ENCODE measurements at regions of chr2 and their contacts with region 1.

Region 1: GRCh38 chr2:44479122-44479887 is 117.6 kb downstream of the CAMKMT start:
- DNase-seq: no peak
- H3K4me3 ChIP-seq: no peak overlapping the region
- H3K27ac ChIP-seq: no peak overlapping the region
- H3K4me1 ChIP-seq: peaks cover 0 to 4% (median 0%) of the 10 kb centered on the region in 6 donors
- H3K27me3 ChIP-seq: no peaks in the 10 kb centered on the region
- CTCF ChIP-seq: peak; percentile 82 to 99 (median 94)
- POLR2A ChIP-seq: no peak

Region 2: DNA sequence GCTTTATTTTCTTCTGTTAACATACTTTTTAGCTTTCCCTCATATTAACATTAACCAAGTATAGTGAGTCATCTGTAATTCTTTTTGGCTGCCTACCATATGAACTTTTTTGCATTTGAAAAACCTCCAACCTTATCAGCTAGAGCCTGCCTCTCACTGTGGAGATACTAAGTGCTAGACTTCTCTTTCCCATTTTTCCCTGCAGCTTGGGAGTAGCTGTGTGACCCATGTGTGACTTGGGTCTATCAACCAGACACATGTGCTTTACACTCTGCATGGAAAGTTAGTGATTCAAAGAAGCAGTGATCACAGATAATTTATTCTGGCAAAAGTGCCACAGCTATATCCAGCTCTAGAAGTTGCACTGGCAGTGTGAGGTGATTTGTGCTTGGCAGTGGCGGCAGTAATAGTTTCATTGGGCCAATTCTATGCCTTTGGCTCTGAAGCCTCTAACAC is 154.3 kb before region 1 on chr2:
- intact Hi-C with region 1: no loop called
- DNase-seq: no peak
- H3K4me3 ChIP-seq: no peak overlapping the region
- H3K27ac ChIP-seq: no peak overlapping the region
- H3K4me1 ChIP-seq: no peaks in the 10 kb centered on the region
- H3K27me3 ChIP-seq: no peaks in the 10 kb centered on the region
- CTCF ChIP-seq: no peak
- POLR2A ChIP-seq: no peak

Region 3: DNA sequence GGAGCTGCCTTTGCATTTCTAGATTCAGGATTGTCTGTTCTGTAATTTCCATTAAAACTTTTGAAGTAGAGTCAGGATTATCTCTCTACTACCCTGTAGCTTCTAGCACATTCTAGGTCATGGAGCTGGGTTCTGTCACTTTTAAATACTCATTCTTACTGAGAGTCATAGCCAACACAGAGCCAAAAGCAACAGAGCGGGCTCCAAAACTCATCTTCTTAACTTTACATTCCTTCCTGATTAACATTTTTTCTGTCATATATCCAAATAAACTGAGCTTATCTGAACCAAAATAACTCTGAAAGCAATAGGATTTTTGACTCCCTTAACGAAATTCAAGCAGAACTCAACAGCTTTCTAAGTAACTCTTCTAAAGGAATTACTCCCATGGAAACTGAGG is 130.9 kb before region 1 on chr2:
- intact Hi-C with region 1: no loop called
- DNase-seq: no peak
- H3K4me3 ChIP-seq: no peak overlapping the region
- H3K27ac ChIP-seq: no peak overlapping the region
- H3K4me1 ChIP-seq: peaks cover 0 to 27% (median 10%) of the 10 kb centered on the region in 6 donors
- H3K27me3 ChIP-seq: no peaks in the 10 kb centered on the region
- CTCF ChIP-seq: no peak
- POLR2A ChIP-seq: no peak

Region 4: DNA sequence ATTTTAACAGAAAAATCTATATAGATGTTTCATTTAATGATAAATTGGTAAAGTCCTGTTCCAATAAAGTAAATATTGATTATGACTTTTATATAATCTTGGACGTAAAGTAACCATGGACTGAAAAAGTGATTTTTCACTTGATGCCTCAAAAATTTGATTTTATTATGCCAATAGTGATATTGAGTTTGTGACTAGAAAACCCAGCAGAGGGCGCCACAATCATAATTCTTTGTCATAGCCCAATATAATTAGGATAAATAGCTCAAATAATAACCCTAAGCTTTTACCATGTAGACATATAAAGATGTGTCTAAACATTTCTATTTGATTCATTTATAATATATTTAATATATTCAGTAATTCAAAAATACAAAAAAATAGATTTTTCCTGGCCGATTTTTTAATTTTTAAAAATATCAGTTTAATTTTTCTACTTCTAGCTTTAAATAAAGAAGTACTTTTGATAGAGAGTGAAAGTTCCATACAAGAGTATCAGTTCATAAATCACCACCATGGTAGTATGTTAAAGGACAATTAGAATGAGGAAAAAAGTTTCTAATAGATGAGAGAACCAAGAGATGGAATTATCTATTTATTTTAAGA is 86.9 kb before region 1 on chr2:
- intact Hi-C with region 1: loop called (anchors 10 kb)
- DNase-seq: no peak
- H3K4me3 ChIP-seq: no peak overlapping the region
- H3K27ac ChIP-seq: no peak overlapping the region
- H3K4me1 ChIP-seq: no peaks in the 10 kb centered on the region
- H3K27me3 ChIP-seq: no peaks in the 10 kb centered on the region
- CTCF ChIP-seq: peak in 8 of 11 experiments; percentile 26 to 61 (median 52)
- POLR2A ChIP-seq: no peak

Measured in spleen (tissue), 13 donors.